Activated B cell treated with CpG ODN at 0.5 μM for 24 hours (primary cell): ENCODE measurements at regions of chr12 and their contacts with region 1.

Region 1: DNA sequence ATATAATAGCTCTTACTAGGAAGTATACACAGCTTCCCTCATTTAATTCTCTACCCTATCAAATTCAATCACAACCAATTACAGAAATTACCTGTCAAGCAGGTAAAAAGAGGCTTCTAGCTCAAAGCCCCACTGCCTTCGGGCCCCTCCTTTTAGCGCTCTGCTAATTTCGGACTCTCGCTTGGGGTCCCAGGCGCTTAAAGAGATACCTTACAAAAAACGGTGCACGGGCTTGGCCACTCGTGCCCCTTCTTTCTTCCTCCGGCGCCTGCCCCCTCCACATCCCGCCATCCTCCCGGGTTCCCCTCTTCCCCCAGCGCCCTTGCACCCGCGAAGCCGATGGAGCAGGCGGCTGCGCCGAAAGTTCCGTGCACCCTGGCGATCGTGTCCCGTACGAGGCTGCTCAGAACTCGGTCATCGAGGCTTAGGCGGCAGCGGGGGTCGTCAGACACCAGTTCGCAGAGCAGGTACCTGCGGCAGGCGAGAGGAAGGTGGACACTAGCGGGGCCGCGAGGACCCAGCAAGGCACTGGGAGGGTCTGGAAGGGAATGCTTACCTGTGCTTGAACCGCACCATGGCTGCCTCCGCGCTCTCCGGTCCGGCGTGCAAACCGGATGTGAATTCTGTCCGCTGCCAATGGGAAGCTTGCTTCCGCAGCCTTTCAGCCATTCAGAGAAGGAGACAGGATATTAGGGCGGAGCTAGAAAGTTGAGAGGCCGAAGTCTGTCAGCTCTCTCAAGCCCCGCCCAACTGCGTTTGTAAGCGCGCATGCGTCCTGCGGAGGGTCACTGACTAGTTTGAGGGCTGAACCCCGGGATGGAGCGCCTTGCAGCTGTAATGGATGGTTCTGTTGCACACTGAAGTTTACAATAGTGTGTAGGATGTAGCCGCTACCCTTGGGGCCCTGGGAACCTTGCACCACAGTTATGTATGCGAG is at the start of gene POP5:
- DNase-seq: peak; percentile 84
- ATAC-seq: peak; percentile 97
- H3K4me3 Mint-ChIP-seq: peak within 1 kb of the TSS; percentile 98
- H3K27ac Mint-ChIP-seq: peak within 1 kb of the TSS; percentile 86
- H3K4me1 Mint-ChIP-seq: peaks cover 38% of the 10 kb centered on the region
- H3K27me3 Mint-ChIP-seq: peaks cover 10% of the 10 kb centered on the region
- CTCF ChIP-seq: no peak
- total RNA-seq, gene POP5: 77.5 and 78.4 TPM in 2 replicates

Region 2: GRCh38 chr12:120437754-120438494 is 143.1 kb before region 1 on chr12 and contains the start of gene COX6A1:
- CTCF ChIA-PET with region 1: interaction called, 3 read pairs
- POLR2A ChIA-PET with region 1: no interaction called
- intact Hi-C with region 1: loop called (anchors 1 kb)
- DNase-seq: peak; percentile 87
- ATAC-seq: peak; percentile 96
- H3K4me3 Mint-ChIP-seq: peak within 1 kb of the TSS; percentile 97
- H3K27ac Mint-ChIP-seq: peak within 1 kb of the TSS; percentile 89
- H3K4me1 Mint-ChIP-seq: peaks cover 29% of the 10 kb centered on the region
- H3K27me3 Mint-ChIP-seq: peaks cover 4% of the 10 kb centered on the region
- CTCF ChIP-seq: no peak
- total RNA-seq, gene COX6A1: 255 and 292 TPM in 2 replicates

Region 3: DNA sequence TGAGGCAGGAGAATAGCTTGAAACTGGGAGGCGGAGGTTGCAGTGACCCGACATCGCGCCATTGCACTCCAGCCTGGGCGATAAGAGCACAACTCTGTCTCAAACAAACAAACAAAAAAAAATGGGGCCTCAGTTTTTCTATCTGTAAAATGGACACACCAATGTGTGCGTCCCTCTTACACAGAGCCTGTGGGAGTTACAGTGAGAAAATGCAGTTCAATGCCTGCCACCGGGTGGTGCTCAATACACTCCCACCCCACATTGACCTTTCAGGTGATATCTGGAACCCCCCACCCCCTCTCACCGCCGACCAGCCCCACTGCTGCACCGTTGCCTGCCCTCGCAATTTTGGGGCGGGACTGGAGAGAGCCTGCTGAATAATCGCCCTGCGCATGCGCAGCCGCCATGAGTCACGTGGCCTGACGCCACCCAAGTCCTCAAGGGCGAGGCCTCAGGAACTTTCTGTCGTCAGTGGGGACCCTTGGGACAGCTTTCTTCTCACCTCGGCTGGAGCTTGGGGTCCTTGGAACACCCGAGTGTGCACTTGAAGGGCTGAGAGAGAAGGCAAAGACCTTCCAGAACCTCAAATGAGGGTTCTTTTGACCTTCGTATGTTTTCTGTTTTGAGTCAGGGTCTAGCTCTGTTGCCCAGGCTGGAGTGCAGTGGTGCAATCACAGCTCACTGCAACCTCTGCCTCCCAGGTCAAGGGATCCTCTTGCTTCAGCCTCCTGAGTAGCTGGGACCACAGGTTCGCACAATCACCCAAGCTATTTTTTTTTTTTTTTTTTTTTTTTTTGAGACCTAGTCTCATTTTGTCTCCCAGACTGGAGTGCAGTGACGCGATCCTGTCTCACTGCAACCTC is 44.7 kb after region 1 on chr12:
- CTCF ChIA-PET with region 1: no interaction called
- POLR2A ChIA-PET with region 1: no interaction called
- intact Hi-C with region 1: no loop called
- DNase-seq: no peak
- ATAC-seq: no peak
- H3K4me3 Mint-ChIP-seq: no peak overlapping the region
- H3K27ac Mint-ChIP-seq: no peak overlapping the region
- H3K4me1 Mint-ChIP-seq: no peaks in the 10 kb centered on the region
- H3K27me3 Mint-ChIP-seq: peaks cover 4% of the 10 kb centered on the region
- CTCF ChIP-seq: no peak

Region 4: DNA sequence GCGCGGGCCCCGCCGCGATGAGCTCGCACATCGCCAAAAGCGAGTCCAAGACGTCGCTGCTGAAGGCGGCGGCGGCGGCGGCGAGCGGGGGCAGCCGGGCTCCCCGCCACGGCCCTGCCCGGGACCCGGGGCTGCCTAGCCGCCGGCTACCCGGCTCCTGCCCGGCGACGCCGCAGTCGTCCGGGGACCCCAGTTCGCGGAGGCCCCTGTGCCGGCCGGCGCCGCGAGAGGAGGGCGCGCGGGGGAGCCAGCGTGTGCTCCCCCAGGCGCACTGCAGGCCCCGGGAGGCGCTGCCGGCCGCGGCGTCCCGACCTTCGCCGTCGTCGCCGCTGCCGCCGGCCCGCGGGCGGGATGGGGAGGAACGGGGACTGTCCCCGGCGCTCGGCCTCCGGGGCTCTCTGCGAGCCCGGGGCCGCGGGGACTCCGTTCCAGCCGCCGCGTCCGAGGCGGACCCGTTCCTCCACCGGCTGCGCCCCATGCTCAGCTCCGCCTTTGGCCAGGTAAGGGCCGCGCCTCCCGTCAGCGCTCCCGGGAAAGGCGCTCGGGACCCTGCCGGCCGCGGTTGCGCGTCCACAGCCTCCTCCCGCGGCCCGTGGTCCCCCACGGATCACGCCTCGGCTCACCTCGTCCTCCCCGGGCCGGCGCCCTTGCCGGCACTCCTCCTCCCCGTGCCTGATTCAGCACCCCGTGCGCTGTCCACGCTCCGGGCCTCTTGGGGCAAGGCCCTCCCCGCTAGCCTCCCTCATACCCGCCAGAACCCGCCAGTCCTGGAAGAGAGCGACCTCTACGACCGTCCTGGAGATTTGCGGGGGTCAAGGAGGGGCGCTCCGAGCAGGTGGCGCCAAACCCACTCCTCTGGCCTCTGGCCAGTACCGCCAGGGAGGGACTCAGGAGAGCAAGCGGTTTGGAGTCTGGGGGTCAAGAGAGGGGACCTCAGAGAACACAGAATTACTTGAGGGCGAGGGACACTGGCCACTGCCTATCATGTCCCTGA is 60.1 kb after region 1 on chr12:
- CTCF ChIA-PET with region 1: no interaction called
- POLR2A ChIA-PET with region 1: no interaction called
- intact Hi-C with region 1: loop called (anchors 1 kb)
- DNase-seq: peak; percentile 52
- ATAC-seq: peak; percentile 72
- H3K4me3 Mint-ChIP-seq: peak overlapping the region; percentile 75
- H3K27ac Mint-ChIP-seq: peak overlapping the region; percentile 41
- H3K4me1 Mint-ChIP-seq: peaks cover 8% of the 10 kb centered on the region
- H3K27me3 Mint-ChIP-seq: peaks cover 48% of the 10 kb centered on the region
- CTCF ChIP-seq: no peak

Region 5: DNA sequence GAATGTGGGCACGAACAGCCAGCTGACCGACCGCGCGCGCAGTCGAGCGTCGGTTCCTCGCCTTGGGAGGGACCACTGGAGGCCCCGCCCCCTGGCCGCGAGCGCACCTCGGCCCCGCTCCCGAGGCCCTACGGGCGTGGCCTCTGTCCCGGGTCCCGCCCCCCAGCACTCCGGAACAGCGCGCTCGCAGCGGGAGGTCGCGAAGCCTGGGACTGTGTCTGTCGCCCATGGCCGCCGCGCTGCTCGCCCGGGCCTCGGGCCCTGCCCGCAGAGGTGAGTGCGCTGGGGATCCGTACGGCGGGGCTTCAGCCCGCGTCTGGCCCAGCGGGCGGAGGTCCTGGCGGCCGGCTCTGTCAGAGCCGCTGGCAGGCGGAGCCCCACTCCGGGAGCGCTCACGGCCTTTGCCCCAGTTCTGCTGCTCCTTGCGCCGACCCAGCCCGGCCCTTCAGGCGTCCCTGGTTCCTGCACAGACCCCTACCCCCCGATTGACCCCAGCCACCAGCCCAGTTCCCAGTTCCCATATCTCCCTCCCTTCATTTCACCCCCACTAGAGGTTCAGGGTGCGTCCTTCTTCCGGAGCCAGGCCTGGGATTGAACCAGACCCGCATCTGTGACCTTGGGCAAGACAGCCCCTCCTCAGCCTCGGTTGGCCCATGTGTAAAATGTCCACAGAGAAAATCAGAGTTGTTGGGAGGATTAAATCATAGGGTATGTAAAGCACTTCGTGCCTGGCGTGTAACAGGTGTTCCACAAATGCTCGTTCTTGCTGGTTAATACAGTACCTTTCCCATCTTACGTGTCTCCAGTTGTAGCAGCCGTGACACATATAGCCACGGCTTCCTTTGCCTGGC is 144.8 kb after region 1 on chr12 and contains the start of gene ACADS:
- CTCF ChIA-PET with region 1: interaction called, 4 read pairs
- POLR2A ChIA-PET with region 1: no interaction called
- intact Hi-C with region 1: loop called (anchors 5 kb)
- DNase-seq: peak; percentile 92
- ATAC-seq: peak; percentile 99
- H3K4me3 Mint-ChIP-seq: peak within 1 kb of the TSS; percentile 86
- H3K27ac Mint-ChIP-seq: peak within 1 kb of the TSS; percentile 70
- H3K4me1 Mint-ChIP-seq: peaks cover 28% of the 10 kb centered on the region
- H3K27me3 Mint-ChIP-seq: no peaks in the 10 kb centered on the region
- CTCF ChIP-seq: no peak
- total RNA-seq, gene ACADS: 9.4 and 11.1 TPM in 2 replicates

Region 6: GRCh38 chr12:121060149-121061001 is 479.3 kb after region 1 on chr12:
- CTCF ChIA-PET with region 1: interaction called, 6 read pairs
- POLR2A ChIA-PET with region 1: no interaction called
- intact Hi-C with region 1: loop called (anchors 1 kb)
- DNase-seq: peak; percentile 26
- ATAC-seq: peak; percentile 94
- H3K4me3 Mint-ChIP-seq: peak overlapping the region; percentile 83
- H3K27ac Mint-ChIP-seq: peak overlapping the region; percentile 82
- H3K4me1 Mint-ChIP-seq: peaks cover 11% of the 10 kb centered on the region
- H3K27me3 Mint-ChIP-seq: no peaks in the 10 kb centered on the region
- CTCF ChIP-seq: peak; percentile 44

Region 7: GRCh38 chr12:121296618-121297434 is 715.8 kb after region 1 on chr12 and contains the start of gene CAMKK2:
- CTCF ChIA-PET with region 1: no interaction called
- POLR2A ChIA-PET with region 1: interaction called, 10 read pairs
- intact Hi-C with region 1: no loop called
- DNase-seq: peak; percentile 94
- ATAC-seq: peak; percentile 87
- H3K4me3 Mint-ChIP-seq: peak within 1 kb of the TSS; percentile 87
- H3K27ac Mint-ChIP-seq: peak within 1 kb of the TSS; percentile 73
- H3K4me1 Mint-ChIP-seq: peaks cover 21% of the 10 kb centered on the region
- H3K27me3 Mint-ChIP-seq: no peaks in the 10 kb centered on the region
- CTCF ChIP-seq: no peak
- total RNA-seq, gene CAMKK2: 19.3 and 20.5 TPM in 2 replicates